ENCODE measurements at regions of chr11 and their contacts with region 1.

Region 1: DNA sequence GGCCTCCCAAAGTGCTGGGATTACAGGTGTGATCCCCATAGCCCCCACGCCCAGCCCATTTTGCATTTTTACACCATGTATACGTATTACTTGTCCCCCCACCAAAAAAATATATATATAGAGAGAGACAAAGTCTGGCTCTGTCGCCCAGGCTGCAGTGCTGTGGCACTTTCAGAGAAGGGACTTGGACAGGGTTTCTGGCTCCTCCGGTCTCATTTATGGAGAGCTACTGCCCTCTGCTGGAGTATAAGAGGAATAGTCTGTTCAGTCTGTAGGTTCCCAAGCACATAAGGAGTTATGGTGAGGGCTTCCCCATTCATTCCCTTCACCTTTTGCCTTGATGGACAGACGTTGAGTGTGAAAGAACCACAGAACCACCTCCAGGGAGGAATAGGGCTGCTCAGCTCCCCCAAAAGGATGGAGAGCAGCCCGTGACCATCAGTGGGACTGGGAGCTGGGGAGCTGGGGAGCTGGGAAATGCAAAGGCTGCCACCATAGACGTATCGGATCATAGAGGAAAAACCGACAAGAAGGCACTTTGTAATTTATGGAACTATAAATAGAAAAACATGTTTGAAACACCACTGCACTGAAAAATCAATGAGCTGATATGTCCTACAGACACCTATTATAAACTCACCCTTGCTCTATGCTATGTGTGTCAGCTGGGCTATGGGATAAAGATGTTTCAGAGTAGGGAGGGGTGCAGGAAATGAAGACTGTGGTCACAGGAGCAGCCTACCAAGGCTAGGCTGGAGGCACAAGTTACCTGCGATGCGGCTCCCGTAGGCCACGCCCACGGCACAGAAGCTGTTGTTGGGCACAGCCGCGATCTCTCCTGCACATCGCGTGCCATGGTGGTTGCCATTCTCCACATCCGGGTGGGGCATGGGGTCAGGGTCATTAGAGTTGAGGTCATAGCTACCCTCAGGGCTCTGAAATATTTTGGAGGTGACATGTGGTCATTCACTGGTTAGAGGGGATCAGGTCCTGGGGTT is 5.2 kb downstream of the PCSK7 start:
- DNase-seq: peak; percentile 35
- H3K4me3 Mint-ChIP-seq: no peak overlapping the region
- H3K27ac Mint-ChIP-seq: no peak overlapping the region
- H3K4me1 Mint-ChIP-seq: peaks cover 14% of the 10 kb centered on the region
- H3K27me3 Mint-ChIP-seq: no peaks in the 10 kb centered on the region
- CTCF ChIP-seq: peak; percentile 49

Region 2: DNA sequence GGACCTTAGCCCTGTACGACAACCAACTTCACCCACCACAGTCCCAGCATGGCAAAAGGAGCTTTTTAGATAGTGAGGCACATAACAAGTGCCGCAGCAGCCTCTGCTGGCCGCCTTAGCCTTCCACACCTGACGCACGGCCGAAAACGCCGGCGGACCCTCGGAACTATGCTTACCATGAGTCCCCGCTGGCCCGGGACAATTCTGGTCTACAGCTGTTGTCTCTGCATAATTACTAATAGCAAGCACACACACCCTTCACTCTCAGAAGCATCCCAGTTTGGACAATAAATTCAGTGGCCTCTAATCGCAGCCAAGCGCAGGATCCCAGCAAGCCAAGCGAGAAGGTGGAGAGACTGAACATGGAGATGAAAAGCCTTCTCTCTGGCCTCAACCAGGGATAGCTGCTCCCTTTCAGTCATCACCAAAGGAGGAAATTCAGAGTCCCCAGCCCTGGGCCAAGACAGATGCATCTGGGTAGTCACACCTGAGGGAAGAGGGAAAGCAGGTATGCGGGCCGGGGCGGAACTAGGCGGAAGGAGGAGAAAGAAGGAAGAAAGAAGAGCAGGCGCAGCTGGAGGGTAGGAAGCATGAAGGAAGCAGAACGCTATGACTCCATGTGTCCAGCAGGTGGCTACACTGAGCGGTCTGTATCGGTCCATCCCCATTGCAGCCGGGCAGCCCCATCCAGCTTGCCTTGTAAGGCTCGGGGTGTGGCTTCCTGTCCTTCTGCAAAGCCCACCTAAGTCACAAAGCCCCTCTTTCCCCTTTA is 494.2 kb before region 1 on chr11:
- CTCF ChIA-PET with region 1: interaction called, 3 read pairs
- intact Hi-C with region 1: loop called (anchors 5 kb)
- DNase-seq: peak; percentile 56
- H3K4me3 Mint-ChIP-seq: no peak overlapping the region
- H3K27ac Mint-ChIP-seq: no peak overlapping the region
- H3K4me1 Mint-ChIP-seq: peaks cover 9% of the 10 kb centered on the region
- H3K27me3 Mint-ChIP-seq: no peaks in the 10 kb centered on the region
- CTCF ChIP-seq: peak; percentile 54

Measured in Calu3 (cell line).